CD4-positive, alpha-beta T cell (primary cell): ENCODE measurements at regions of chr12 and their contacts with region 1.

Region 1: DNA sequence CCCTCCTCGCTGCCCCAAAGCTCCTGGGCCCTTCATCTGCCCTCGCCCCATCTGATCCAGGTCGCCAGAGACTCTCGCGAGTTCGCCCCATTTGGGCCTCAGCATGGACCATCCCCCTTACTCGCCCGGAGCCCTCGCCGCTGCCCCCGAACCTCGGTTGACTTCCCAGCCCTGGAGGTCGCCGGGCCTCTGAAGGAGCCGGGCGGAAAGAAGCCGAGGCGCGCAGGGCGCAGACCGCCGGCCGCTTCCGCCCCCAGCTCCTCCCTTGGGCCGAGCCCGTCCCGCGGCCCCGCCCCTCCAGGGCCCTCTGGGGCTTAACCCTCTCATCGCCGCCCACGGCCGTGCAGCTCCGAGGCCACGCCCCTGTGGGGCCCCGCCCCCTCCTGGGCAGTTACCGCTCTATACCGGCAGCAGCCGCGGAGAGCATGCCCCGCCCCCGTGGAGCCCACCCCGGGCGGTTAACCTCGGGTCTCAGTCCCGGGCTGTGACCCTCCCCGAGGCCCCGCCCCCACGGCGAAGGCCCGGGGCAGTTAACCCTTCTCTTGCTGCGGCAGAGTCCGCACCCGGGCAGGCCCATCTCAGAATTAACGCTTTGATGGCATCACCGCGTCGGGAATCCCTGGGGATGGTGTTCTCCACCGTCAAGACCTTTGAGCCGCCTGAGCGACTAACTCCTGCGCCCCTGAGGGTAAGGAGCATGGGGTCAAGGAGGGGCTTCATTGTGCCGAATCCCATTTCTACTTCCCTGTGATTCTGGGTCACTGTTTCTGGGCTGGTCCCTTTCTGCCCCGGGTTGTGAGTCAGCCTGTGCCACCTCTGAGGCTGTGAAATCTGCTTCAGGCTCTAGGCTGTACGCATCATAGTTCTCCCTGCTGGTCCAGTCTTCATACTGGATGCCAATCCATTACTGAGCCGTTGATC is at the start of gene SPSB2:
- DNase-seq: peak; percentile 96 to 100 (median 99)
- ATAC-seq: peak; percentile 89
- H3K4me3 ChIP-seq: peak within 1 kb of the TSS; percentile 93
- H3K4me3 Mint-ChIP-seq: peak within 1 kb of the TSS; percentile 88
- H3K27ac ChIP-seq: peak within 1 kb of the TSS; percentile 58 to 81
- H3K27ac Mint-ChIP-seq: peak within 1 kb of the TSS; percentile 78
- H3K4me1 ChIP-seq: peaks cover 57% of the 10 kb centered on the region
- H3K4me1 Mint-ChIP-seq: peaks cover 54% of the 10 kb centered on the region
- H3K27me3 ChIP-seq: no peaks in the 10 kb centered on the region
- H3K27me3 Mint-ChIP-seq: no peaks in the 10 kb centered on the region
- CTCF ChIP-seq: no peak
- total RNA-seq, gene SPSB2: 3.2 to 3.3 TPM

Region 2: DNA sequence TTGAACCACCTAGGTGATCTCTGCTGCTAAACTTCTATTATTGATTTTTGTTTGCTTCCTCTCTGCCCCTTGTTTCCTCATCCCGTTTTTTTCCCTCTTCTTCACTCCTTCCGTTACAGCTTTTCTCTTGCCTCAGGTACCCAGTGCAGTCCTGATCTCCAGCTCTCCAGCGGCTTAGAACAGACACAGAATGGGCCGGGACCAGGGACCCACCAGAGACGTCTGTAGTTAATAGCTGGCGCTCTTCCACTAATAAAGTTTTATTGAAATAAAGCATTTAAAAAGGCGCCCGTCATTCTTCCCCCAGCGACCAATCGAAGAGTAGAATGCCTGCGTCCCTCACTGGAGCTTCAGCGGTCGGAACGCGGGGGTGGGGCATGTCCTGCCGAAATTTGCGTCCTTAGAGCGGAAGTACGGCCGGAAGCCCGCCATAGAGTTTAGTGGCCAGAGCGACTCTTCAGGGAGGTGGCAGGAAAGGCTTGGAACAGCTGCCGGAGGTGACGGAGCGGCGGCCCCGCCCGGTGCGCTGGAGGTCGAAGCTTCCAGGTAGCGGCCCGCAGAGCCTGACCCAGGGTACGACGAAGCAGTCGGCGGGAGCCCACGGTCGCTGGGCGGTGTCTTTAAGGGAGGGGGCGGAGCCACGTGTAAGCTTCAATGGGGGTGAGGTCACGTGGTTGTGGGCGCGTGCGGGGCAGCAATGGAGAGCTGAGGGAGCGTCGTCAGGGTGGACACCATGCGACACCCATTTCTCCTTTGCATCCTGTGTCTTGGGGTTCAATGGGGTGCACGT is 149.6 kb before region 1 on chr12 and contains the start of gene COPS7A:
- CTCF ChIA-PET with region 1: interaction called, 4 read pairs
- POLR2A ChIA-PET with region 1: interaction called, 10 read pairs
- intact Hi-C with region 1: no loop called
- DNase-seq: peak; percentile 81 to 99 (median 93)
- ATAC-seq: peak; percentile 84
- H3K4me3 ChIP-seq: peak within 1 kb of the TSS; percentile 59
- H3K4me3 Mint-ChIP-seq: peak within 1 kb of the TSS; percentile 87
- H3K27ac ChIP-seq: peak within 1 kb of the TSS; percentile 68 to 88
- H3K27ac Mint-ChIP-seq: peak within 1 kb of the TSS; percentile 83
- H3K4me1 ChIP-seq: peaks cover 18% of the 10 kb centered on the region
- H3K4me1 Mint-ChIP-seq: peaks cover 28% of the 10 kb centered on the region
- H3K27me3 ChIP-seq: no peaks in the 10 kb centered on the region
- H3K27me3 Mint-ChIP-seq: no peaks in the 10 kb centered on the region
- CTCF ChIP-seq: no peak
- total RNA-seq, gene COPS7A: 9.4 to 9.6 TPM

Region 3: DNA sequence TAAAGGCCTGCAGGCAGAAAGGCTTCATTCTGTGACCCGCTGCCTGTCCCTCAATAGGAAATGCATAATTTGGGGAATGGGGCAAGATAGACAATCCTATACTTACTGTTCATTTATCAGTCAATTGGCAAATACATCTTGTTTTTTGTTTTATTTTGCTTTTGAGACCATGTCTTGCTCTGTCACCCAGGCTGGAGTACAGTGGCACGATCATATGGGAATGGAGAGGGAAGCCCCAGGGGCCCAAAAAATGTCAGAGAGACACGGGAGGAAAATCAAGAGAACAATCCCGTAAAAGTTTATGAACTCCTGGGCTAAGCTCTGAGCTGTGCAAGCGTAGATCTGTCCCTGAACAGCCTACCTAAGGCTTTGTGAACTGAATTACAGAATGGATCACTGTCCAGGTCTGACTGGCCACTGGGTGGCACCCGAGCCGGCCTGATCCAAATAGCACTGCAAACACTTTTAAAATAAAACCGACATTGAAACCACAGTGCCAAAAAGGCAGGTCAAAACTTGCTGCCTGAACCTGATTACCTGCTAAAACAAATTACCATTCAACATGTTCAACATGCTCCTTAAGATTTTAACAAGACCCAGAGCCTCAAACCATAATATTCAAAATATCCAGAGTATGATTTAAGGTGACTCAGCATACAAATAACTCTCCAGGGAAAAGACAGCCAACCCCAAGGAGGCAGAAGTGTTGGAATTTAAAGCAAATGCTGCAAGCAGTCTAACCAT is 137.7 kb before region 1 on chr12:
- CTCF ChIA-PET with region 1: no interaction called
- POLR2A ChIA-PET with region 1: no interaction called
- intact Hi-C with region 1: no loop called
- DNase-seq: peak in 13 of 14 experiments; percentile 9 to 64 (median 37)
- ATAC-seq: peak; percentile 67
- H3K4me3 ChIP-seq: no peak overlapping the region
- H3K4me3 Mint-ChIP-seq: no peak overlapping the region
- H3K27ac ChIP-seq: no peak overlapping the region
- H3K27ac Mint-ChIP-seq: no peak overlapping the region
- H3K4me1 ChIP-seq: no peaks in the 10 kb centered on the region
- H3K4me1 Mint-ChIP-seq: peaks cover 4% of the 10 kb centered on the region
- H3K27me3 ChIP-seq: no peaks in the 10 kb centered on the region
- H3K27me3 Mint-ChIP-seq: no peaks in the 10 kb centered on the region
- CTCF ChIP-seq: peak; percentile 58

Region 4: DNA sequence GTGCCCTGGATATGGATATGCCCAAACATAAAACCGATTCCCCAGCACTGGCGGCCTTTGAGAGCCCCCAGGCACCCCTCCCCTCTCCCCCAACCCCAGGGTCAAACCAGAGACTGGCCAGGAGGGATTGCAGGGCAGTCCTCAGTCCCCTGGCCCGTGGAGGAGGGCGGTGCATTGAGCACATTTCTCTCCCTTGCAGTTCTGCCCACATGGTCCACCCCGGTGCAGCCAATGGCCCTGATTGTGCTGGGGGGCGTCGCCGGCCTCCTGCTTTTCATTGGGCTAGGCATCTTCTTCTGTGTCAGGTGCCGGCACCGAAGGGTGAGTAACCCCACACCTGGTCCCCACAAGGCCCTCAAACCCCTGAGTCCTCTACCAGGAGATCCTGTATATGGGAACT is 55.1 kb before region 1 on chr12:
- CTCF ChIA-PET with region 1: no interaction called
- POLR2A ChIA-PET with region 1: no interaction called
- intact Hi-C with region 1: no loop called
- DNase-seq: no peak
- ATAC-seq: no peak
- H3K4me3 ChIP-seq: no peak overlapping the region
- H3K4me3 Mint-ChIP-seq: no peak overlapping the region
- H3K27ac ChIP-seq: no peak overlapping the region
- H3K27ac Mint-ChIP-seq: no peak overlapping the region
- H3K4me1 ChIP-seq: peaks cover 19% of the 10 kb centered on the region
- H3K4me1 Mint-ChIP-seq: peaks cover 10% of the 10 kb centered on the region
- H3K27me3 ChIP-seq: peaks cover 0 to 5% of the 10 kb centered on the region in 2 experiments
- H3K27me3 Mint-ChIP-seq: peaks cover 12% of the 10 kb centered on the region
- CTCF ChIP-seq: no peak

Region 5: GRCh38 chr12:6851921-6852650 is 21.3 kb before region 1 on chr12 and contains the start of gene USP5:
- CTCF ChIA-PET with region 1: interaction called, 46 read pairs
- POLR2A ChIA-PET with region 1: interaction called, 106 read pairs
- intact Hi-C with region 1: loop called (anchors 1 kb)
- DNase-seq: peak; percentile 94 to 100 (median 97)
- ATAC-seq: peak; percentile 77
- H3K4me3 ChIP-seq: peak within 1 kb of the TSS; percentile 73
- H3K4me3 Mint-ChIP-seq: peak within 1 kb of the TSS; percentile 91
- H3K27ac ChIP-seq: peak within 1 kb of the TSS; percentile 89 to 95
- H3K27ac Mint-ChIP-seq: peak within 1 kb of the TSS; percentile 87
- H3K4me1 ChIP-seq: peaks cover 42% of the 10 kb centered on the region
- H3K4me1 Mint-ChIP-seq: peaks cover 29% of the 10 kb centered on the region
- H3K27me3 ChIP-seq: no peaks in the 10 kb centered on the region
- H3K27me3 Mint-ChIP-seq: no peaks in the 10 kb centered on the region
- CTCF ChIP-seq: no peak
- total RNA-seq, gene USP5: 31.8 to 33.4 TPM

Region 6: GRCh38 chr12:6904280-6905278 is 31.2 kb after region 1 on chr12 and contains the start of gene LRRC23:
- CTCF ChIA-PET with region 1: interaction called, 43 read pairs
- POLR2A ChIA-PET with region 1: interaction called, 13 read pairs
- intact Hi-C with region 1: loop called in 1 of 2 experiments (anchors 1 kb)
- DNase-seq: peak; percentile 92 to 99 (median 96)
- ATAC-seq: peak; percentile 96
- H3K4me3 ChIP-seq: peak within 1 kb of the TSS; percentile 60
- H3K4me3 Mint-ChIP-seq: peak within 1 kb of the TSS; percentile 22
- H3K27ac ChIP-seq: peak within 1 kb of the TSS; percentile 81 to 94
- H3K27ac Mint-ChIP-seq: no peak within 1 kb of the TSS
- H3K4me1 ChIP-seq: peaks cover 21% of the 10 kb centered on the region
- H3K4me1 Mint-ChIP-seq: no peaks in the 10 kb centered on the region
- H3K27me3 ChIP-seq: no peaks in the 10 kb centered on the region
- H3K27me3 Mint-ChIP-seq: no peaks in the 10 kb centered on the region
- CTCF ChIP-seq: no peak
- total RNA-seq, gene LRRC23: 3.2 to 4.7 TPM

Region 7: DNA sequence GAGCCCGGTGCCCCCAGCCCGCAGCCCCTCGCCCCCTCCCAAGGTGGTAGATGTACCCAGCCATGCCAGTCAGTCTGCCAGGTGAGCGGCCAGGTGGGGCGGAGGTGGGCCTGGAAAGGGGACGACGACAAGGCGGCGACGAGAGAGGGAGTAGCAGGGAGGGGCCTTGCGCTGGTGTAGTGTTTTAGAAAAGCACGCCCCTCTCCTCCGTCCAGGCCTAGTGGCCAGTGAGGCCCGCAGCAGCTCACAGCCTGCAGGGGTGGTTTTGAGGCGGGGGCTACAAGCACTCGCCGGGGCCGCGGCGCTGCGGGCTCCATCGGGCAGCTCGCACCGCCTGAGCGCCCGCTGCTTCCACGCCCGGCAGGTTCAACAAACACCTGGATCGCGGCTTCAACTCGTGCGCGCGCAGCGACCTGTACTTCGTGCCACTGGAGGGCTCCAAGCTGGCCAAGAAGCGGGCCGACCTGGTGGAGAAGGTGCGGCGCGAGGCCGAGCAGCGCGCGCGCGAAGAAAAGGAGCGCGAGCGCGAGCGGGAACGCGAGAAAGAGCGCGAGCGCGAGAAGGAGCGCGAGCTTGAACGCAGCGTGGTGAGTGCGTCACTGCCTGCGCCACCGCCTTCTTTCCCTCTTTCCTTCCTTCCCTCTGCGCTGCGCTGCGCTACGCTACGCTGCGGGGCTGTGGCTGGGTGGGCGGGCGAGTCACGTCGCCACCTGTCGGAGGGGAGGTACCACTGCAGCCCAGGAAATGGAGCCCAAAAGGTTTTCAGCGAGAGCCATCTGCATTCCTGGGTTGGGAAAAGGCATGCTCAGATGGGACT is 64.3 kb after region 1 on chr12:
- CTCF ChIA-PET with region 1: interaction called, 33 read pairs
- POLR2A ChIA-PET with region 1: interaction called, 74 read pairs
- intact Hi-C with region 1: loop called in 1 of 2 experiments (anchors 5 kb)
- DNase-seq: peak; percentile 86 to 99 (median 92)
- ATAC-seq: peak; percentile 91
- H3K4me3 ChIP-seq: peak overlapping the region; percentile 72
- H3K4me3 Mint-ChIP-seq: peak overlapping the region; percentile 90
- H3K27ac ChIP-seq: peak overlapping the region; percentile 89 to 92
- H3K27ac Mint-ChIP-seq: peak overlapping the region; percentile 95
- H3K4me1 ChIP-seq: peaks cover 47% of the 10 kb centered on the region
- H3K4me1 Mint-ChIP-seq: peaks cover 61% of the 10 kb centered on the region
- H3K27me3 ChIP-seq: no peaks in the 10 kb centered on the region
- H3K27me3 Mint-ChIP-seq: no peaks in the 10 kb centered on the region
- CTCF ChIP-seq: peak; percentile 89

Region 8: GRCh38 chr12:6959058-6959804 is 85.9 kb after region 1 on chr12:
- CTCF ChIA-PET with region 1: interaction called, 8 read pairs
- POLR2A ChIA-PET with region 1: interaction called, 17 read pairs
- intact Hi-C with region 1: loop called in 1 of 2 experiments (anchors 2 kb)
- DNase-seq: peak; percentile 57 to 93 (median 69)
- ATAC-seq: peak; percentile 60
- H3K4me3 ChIP-seq: peak overlapping the region; percentile 50
- H3K4me3 Mint-ChIP-seq: peak overlapping the region; percentile 92
- H3K27ac ChIP-seq: peak overlapping the region; percentile 90 to 96
- H3K27ac Mint-ChIP-seq: peak overlapping the region; percentile 97
- H3K4me1 ChIP-seq: peaks cover 98% of the 10 kb centered on the region
- H3K4me1 Mint-ChIP-seq: peaks cover 81% of the 10 kb centered on the region
- H3K27me3 ChIP-seq: no peaks in the 10 kb centered on the region
- H3K27me3 Mint-ChIP-seq: no peaks in the 10 kb centered on the region
- CTCF ChIP-seq: no peak

Region 9: DNA sequence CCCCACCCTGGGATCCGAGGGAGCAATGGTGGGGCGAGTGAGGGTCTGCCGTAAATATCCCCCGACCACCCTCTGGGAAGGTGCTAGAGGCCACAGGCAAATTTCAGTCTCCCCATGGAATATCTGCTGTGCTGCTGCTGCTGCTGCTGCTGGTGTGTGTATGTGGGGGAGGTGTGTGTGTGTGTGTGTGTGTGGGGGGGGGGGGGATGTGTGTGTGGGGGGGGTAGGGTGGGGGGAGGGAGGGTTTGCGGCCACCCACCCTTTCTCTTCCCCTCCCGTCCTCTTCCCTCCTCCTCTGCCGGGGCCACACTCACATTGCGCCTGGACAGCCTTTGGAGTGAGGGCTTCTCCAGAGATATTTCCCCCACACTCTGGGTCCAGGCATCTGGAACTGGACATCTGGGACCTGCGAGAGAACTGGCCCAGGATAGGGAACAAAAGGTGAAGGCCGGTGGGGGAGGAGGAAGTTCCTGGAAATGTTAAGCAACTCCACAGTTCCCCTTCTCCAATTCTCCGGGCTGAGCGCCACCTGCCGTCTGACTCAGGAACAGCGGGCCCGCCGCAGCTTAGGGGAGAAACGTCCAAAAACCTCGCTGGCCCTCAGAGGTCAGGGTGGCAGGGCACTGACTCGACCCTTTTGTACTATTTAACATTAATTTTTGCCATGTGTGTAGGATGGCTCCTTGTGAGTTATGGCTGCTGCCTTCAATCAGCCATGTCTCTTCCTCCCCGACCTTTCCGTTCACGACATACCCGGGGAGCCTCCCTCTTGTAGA is 235.6 kb after region 1 on chr12 and contains the start of gene C1RL:
- CTCF ChIA-PET with region 1: interaction called, 16 read pairs
- POLR2A ChIA-PET with region 1: interaction called, 23 read pairs
- intact Hi-C with region 1: loop called (anchors 1 to 2 kb)
- DNase-seq: peak; percentile 55 to 85 (median 76)
- ATAC-seq: peak; percentile 48
- H3K4me3 ChIP-seq: peak within 1 kb of the TSS; percentile 70
- H3K4me3 Mint-ChIP-seq: peak within 1 kb of the TSS; percentile 93
- H3K27ac ChIP-seq: peak within 1 kb of the TSS; percentile 79 to 80
- H3K27ac Mint-ChIP-seq: peak within 1 kb of the TSS; percentile 93
- H3K4me1 ChIP-seq: peaks cover 43% of the 10 kb centered on the region
- H3K4me1 Mint-ChIP-seq: peaks cover 46% of the 10 kb centered on the region
- H3K27me3 ChIP-seq: no peaks in the 10 kb centered on the region
- H3K27me3 Mint-ChIP-seq: no peaks in the 10 kb centered on the region
- CTCF ChIP-seq: peak; percentile 95
- total RNA-seq, gene C1RL: 12.2 to 14.1 TPM